Naive thymus-derived CD4-positive, alpha-beta T cell (primary cell): ENCODE measurements at regions of chr4 and their contacts with region 1.

Region 1: DNA sequence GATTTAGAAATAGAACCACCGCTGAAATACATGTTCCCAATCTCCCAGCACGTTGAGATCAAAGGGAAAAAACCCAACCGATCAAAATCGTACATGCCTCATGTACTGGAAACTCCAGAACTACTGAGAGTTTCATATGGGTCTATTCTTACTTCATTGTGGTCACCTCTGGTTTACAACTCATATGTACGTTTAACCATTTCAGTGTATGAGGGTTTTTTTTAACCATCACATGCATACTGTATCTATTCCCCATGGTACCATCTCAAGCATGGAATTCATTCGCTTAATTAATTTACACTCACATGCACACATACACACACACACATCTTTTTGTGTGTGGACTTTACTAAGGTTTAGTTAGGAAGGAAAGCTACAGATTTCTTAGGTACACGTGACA is 46.0 kb upstream of the CLNK start:
- DNase-seq: no peak
- ATAC-seq: no peak
- H3K4me3 ChIP-seq: no peak overlapping the region
- H3K4me3 Mint-ChIP-seq: peak overlapping the region in 1 of 10 donors; percentile 22
- H3K27ac ChIP-seq: no peak overlapping the region
- H3K27ac Mint-ChIP-seq: peak overlapping the region in 1 of 9 donors; percentile 64
- H3K4me1 ChIP-seq: no peaks in the 10 kb centered on the region
- H3K4me1 Mint-ChIP-seq: peaks cover 3 to 60% (median 8%) of the 10 kb centered on the region in 7 donors
- H3K27me3 ChIP-seq: no peaks in the 10 kb centered on the region
- H3K27me3 Mint-ChIP-seq: no peaks in the 10 kb centered on the region

Region 2: GRCh38 chr4:10655986-10656385 is 74.6 kb before region 1 on chr4:
- CTCF ChIA-PET with region 1: no interaction called
- POLR2A ChIA-PET with region 1: no interaction called
- intact Hi-C with region 1: loop called in 1 of 2 experiments (anchors 5 kb)
- DNase-seq: no peak
- ATAC-seq: no peak
- H3K4me3 ChIP-seq: no peak overlapping the region
- H3K4me3 Mint-ChIP-seq: peak overlapping the region in 3 of 10 donors; percentile 10 to 24 (median 21)
- H3K27ac ChIP-seq: no peak overlapping the region
- H3K27ac Mint-ChIP-seq: peak overlapping the region in 2 of 9 donors; percentile 45 to 60
- H3K4me1 ChIP-seq: peaks cover 0 to 8% of the 10 kb centered on the region in 2 donors
- H3K4me1 Mint-ChIP-seq: peaks cover 5 to 41% (median 18%) of the 10 kb centered on the region in 7 donors
- H3K27me3 ChIP-seq: no peaks in the 10 kb centered on the region
- H3K27me3 Mint-ChIP-seq: no peaks in the 10 kb centered on the region